ENCODE measurements at regions of chr7 and their contacts with region 1.

Region 1: GRCh38 chr7:103573479-103574058 is 127.6 kb upstream of the SLC26A5 start:
- DNase-seq: no peak
- ATAC-seq: no peak
- H3K4me3 ChIP-seq: no peak overlapping the region
- H3K27ac ChIP-seq: no peak overlapping the region
- H3K4me1 ChIP-seq: no peaks in the 10 kb centered on the region
- H3K27me3 ChIP-seq: no peaks in the 10 kb centered on the region
- CTCF ChIP-seq: peak; percentile 32 to 77 (median 67)

Region 2: DNA sequence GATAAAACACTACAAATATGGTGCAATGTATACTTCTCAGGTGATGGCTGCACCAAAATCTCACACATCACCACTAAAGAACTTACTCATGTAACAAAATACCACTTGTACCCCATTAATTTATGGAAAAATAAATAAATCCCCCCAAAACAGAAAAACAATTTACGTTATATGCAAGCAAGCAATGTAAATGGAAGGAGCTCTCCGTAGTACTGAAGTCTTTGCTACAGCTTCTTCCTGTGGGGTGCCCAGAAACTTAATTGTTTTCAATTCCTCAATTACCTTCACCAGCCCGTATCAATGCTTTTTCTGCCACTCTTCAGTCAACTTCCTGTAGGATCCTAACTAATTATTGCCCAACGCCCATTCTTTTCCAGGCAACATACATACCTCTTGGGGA is 277.8 kb after region 1 on chr7:
- intact Hi-C with region 1: no loop called
- DNase-seq: no peak
- ATAC-seq: no peak
- H3K4me3 ChIP-seq: no peak overlapping the region
- H3K27ac ChIP-seq: no peak overlapping the region
- H3K4me1 ChIP-seq: no peaks in the 10 kb centered on the region
- H3K27me3 ChIP-seq: no peaks in the 10 kb centered on the region
- CTCF ChIP-seq: no peak

Region 3: DNA sequence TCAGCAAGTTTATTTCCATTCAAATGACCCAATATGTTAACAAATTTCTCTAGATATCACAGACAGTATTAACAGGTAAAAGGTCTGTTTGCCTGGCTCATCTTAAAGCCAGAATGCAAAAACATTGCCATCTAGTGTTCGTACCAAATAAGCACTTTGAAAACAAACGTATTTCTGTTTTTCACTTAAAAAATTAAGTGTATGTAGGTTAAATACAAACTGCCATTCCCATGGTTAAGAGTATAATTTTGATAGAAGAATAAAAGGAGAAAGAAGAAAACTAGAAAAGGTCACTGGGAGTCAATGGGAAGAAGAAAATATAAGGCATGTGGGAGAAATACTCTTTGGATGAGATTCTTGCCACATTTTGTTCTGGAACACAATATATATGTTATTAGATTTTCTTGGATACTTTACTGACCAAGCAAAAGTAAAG is 583.3 kb after region 1 on chr7:
- intact Hi-C with region 1: loop called (anchors 5 to 10 kb)
- DNase-seq: no peak
- ATAC-seq: no peak
- H3K4me3 ChIP-seq: no peak overlapping the region
- H3K27ac ChIP-seq: no peak overlapping the region
- H3K4me1 ChIP-seq: peaks cover 0 to 1% (median 0%) of the 10 kb centered on the region in 9 donors
- H3K27me3 ChIP-seq: no peaks in the 10 kb centered on the region
- CTCF ChIP-seq: peak; percentile 17 to 67 (median 53)